IMR-90 (cell line): ENCODE measurements at regions of chr22 and their contacts with region 1.

Region 1: DNA sequence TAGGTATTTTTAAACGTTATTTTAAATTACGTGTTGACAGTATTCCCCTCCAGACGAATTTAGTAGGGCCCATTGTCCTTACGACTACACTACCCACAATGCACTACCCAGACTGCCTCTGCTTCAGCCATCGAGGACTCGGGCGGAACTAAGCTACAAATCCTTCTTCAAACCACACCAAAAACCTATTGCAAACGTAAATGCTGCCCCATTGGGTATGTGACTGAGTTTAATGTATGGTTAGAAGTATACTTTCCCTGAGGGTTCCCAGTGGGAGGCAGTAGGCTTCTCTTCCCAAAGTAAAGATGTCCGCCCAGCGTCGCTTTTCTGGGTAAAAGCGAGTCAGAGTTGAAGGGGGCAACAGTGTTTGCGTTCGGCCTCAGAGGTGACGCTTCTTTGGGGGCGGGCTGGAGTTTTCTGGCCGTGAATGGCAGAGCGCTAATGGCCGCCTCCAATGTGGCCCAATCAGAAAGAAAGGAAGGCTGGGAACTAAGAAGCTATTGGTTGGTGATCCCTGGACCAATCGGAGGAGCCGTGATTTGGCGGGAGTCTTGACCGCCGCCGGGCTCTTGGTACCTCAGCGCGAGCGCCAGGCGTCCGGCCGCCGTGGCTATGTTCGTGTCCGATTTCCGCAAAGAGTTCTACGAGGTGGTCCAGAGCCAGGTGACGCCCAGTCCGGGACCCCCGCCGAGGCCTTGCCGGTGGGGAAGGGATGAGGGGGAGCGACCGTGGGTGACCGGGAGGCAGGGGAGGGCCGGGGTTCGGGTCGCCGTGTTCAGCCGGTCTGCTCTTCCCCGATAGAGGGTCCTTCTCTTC is at the start of gene CDC45:
- DNase-seq: peak; percentile 98
- ATAC-seq: peak; percentile 93
- H3K4me3 ChIP-seq: peak within 1 kb of the TSS; percentile 87
- H3K27ac ChIP-seq: peak within 1 kb of the TSS; percentile 95
- H3K4me1 ChIP-seq: peaks cover 3% of the 10 kb centered on the region
- H3K27me3 ChIP-seq: no peaks in the 10 kb centered on the region
- CTCF ChIP-seq: no peak
- POLR2A ChIP-seq: peak; percentile 39; the same call in 1 of the 2 replicates
- RAD21 ChIP-seq: no peak
- total RNA-seq, gene CDC45: 37.5 and 44.6 TPM in 2 replicates

Region 2: DNA sequence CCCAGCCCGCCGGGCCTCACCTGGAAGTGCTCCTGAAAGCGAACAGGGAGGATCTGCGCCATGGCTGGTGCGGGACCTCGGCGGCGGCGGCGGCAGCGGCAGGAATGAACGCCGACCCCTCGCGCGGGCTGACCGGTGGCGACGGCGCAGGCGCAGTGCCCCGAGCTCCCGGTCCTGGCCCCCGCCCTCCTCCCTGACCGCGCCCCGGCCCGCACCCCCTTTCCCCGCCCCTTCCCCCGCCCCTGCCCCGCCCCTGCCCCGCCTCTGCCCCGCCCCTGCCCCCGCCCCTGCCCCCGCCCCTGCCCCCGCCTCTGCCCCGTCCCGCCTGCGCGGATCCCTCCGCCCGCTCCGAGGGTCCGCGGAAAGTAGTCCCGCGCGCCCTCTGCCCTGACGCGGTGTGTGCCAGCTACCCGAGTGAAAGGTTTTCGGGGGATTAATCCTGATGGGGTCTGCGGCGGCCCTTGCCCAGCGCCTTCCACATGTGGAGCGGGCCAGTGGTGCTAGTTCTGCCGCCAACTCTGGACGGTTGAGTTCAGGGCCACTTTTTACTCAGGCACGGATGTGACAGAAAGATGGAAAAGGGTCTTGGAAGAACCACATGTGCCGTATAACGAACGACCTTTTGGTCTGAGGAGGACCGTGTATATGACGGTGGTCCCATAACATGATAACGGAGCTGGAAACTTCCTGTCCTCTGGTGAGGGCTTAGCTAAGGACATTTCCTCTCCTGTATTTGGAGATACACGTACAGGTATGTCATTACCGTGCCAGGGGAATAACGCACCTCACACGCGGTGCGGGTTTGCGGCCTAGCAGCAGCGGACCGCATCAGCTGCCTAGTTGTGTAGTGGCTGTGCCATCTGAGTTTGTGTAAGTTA is 187.7 kb before region 1 on chr22 and contains the start of gene CLTCL1:
- CTCF ChIA-PET with region 1: no interaction called
- POLR2A ChIA-PET with region 1: no interaction called
- dilution Hi-C with region 1: no loop called
- in situ Hi-C with region 1: no loop called
- intact Hi-C with region 1: loop called (anchors 5 kb)
- DNase-seq: peak; percentile 58
- ATAC-seq: peak; percentile 91
- H3K4me3 ChIP-seq: peak within 1 kb of the TSS; percentile 80
- H3K27ac ChIP-seq: peak within 1 kb of the TSS; percentile 39
- H3K4me1 ChIP-seq: peaks cover 17% of the 10 kb centered on the region
- H3K27me3 ChIP-seq: peaks cover 3% of the 10 kb centered on the region; the same call in 1 of the 2 replicates
- CTCF ChIP-seq: no peak
- POLR2A ChIP-seq: no peak
- RAD21 ChIP-seq: no peak
- total RNA-seq, gene CLTCL1: 7.5 and 8.1 TPM in 2 replicates

Region 3: DNA sequence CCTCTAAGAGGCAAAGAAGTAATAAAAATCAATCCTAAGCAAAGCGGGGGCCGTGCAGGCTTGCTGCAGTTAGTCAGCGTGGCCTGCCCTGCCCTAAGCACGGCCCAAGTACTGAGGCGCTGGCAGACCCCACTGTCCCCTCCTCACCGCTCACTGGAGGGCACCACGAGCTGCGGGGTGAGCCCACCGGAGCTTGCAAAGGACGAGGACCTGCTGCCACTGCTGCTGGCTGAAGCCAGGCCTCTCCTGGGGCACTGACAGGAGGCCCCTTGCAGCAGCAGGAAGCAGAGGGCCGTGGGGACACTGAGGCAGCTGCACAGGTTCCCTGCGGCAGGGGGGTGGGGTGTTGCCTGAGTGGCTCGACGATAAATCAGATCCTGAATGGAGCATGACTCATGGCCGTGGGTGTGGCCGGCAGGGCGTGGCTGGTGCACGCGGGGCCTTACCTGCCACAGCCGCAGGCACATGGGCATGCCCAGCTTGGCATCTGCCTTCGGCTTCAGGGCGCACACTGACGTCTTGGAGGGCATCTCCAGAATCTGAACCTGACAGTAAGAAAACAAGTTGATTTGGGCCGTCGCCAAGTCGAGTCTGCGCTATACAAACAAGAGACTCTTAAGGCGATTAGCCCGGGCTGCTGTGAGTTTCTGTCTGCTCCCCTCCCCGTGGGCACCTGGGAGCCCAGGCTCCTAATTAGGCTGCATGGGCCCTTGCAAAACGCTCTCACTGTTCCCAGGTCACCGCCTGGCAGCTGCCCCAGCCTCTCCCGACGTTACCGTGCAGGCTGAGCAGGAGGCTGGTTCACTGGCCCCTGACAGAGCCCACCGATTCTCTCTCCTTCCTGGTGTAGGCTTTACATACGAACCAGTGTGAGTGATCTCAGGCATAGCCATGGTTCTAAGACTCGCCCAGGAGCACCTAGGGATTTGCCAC is 326.9 kb after region 1 on chr22:
- CTCF ChIA-PET with region 1: no interaction called
- POLR2A ChIA-PET with region 1: no interaction called
- dilution Hi-C with region 1: no loop called
- in situ Hi-C with region 1: no loop called
- intact Hi-C with region 1: no loop called
- DNase-seq: no peak
- ATAC-seq: no peak
- H3K4me3 ChIP-seq: no peak overlapping the region
- H3K27ac ChIP-seq: no peak overlapping the region
- H3K4me1 ChIP-seq: peaks cover 14% of the 10 kb centered on the region
- H3K27me3 ChIP-seq: no peaks in the 10 kb centered on the region
- CTCF ChIP-seq: no peak
- POLR2A ChIP-seq: no peak
- RAD21 ChIP-seq: no peak

Region 4: DNA sequence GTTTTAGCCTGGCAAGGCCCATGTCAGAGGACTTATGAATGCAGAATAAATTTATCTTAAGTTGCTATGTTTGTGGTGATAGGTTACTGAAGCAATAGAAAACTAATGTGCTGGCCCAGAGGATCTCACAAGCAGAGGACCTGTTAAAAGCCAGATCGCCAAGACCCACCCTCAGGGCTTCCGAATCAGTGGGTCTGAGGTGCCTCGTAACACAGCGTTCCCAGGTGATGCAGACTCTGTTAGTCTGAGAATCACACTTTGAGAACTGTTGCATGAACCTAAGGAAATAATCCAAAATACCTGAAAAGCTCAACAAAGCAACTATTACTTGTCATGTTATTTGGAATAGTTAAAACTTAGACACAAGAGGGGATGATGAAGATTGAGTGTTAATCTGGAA is 964.8 kb after region 1 on chr22:
- CTCF ChIA-PET with region 1: no interaction called
- POLR2A ChIA-PET with region 1: interaction called, 15 read pairs
- dilution Hi-C with region 1: no loop called
- in situ Hi-C with region 1: no loop called
- intact Hi-C with region 1: no loop called
- DNase-seq: no peak
- ATAC-seq: no peak
- H3K4me3 ChIP-seq: no peak overlapping the region
- H3K27ac ChIP-seq: no peak overlapping the region
- H3K4me1 ChIP-seq: no peaks in the 10 kb centered on the region
- H3K27me3 ChIP-seq: no peaks in the 10 kb centered on the region
- CTCF ChIP-seq: no peak
- POLR2A ChIP-seq: no peak
- RAD21 ChIP-seq: no peak